Naive thymus-derived CD4-positive, alpha-beta T cell (primary cell): ENCODE measurements at regions of chr19 and their contacts with region 1.

Region 1: GRCh38 chr19:7535035-7535992 is at the start of gene PNPLA6:
- DNase-seq: peak; percentile 85 to 95 (median 91)
- ATAC-seq: peak; percentile 91
- H3K4me3 ChIP-seq: peak within 1 kb of the TSS; percentile 99
- H3K4me3 Mint-ChIP-seq: peak within 1 kb of the TSS; percentile 93 to 97 (median 94)
- H3K27ac ChIP-seq: peak within 1 kb of the TSS; percentile 81
- H3K27ac Mint-ChIP-seq: peak within 1 kb of the TSS; percentile 81 to 96 (median 92)
- H3K4me1 ChIP-seq: peaks cover 10 to 17% of the 10 kb centered on the region in 2 donors
- H3K4me1 Mint-ChIP-seq: peaks cover 6 to 26% (median 22%) of the 10 kb centered on the region in 7 donors
- H3K27me3 ChIP-seq: no peaks in the 10 kb centered on the region
- H3K27me3 Mint-ChIP-seq: no peaks in the 10 kb centered on the region
- total RNA-seq, gene PNPLA6: 82.0 to 157 (median 133) TPM

Region 2: DNA sequence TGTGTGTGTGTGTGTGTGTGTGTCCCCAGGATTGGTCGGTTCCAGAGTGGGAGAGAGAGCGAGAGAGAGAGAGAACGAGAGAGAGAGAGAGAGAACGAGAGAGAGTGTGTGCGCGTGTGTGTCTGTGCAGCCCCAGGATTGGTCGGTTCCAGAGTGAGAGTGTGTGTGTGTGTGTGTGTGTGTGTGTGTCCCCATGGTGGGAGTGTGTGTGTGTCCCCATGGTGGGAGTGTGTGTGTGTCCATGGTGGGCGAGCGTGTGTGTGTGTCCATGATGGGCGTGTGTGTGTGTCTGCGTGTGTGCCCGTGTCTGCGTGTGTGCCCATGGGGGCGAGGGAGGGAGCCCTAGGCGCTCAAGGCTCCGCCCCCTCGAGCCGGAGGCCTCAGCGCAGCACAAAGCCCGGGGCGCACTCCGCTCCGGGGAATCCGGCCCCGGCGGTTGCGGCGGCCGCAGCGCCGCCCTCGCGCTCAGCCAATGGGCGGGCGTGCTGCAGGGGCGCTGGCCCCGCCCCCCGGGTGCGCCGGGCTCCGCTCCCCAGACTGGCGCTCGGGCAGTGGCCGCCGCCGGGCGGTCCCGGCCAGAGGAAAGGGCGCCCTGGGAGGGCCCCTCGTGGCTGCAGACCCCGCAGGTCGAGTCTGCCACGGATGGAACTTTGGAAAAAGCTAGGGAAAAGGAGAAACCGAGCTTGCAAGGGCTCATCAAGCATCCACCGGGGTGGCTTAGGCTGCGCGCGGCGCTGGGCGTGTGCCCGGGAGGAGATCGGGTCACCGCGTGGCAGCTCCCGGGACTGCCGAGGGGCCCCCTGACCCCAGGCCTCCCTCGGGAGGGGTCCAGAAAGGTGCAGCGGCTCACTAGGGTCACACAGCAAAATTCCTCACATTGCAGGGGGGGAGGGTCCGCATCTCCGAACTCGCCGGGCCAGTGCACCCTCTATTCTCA is 337.3 kb before region 1 on chr19:
- CTCF ChIA-PET with region 1: no interaction called
- POLR2A ChIA-PET with region 1: no interaction called
- intact Hi-C with region 1: loop called in 1 of 2 experiments (anchors 1 kb)
- DNase-seq: peak; percentile 91 to 95 (median 94)
- ATAC-seq: peak; percentile 92
- H3K4me3 ChIP-seq: peak overlapping the region; percentile 75
- H3K4me3 Mint-ChIP-seq: peak overlapping the region; percentile 88 to 99 (median 94)
- H3K27ac ChIP-seq: peak overlapping the region; percentile 71
- H3K27ac Mint-ChIP-seq: peak overlapping the region; percentile 95 to 100 (median 97)
- H3K4me1 ChIP-seq: peaks cover 12 to 15% of the 10 kb centered on the region in 2 donors
- H3K4me1 Mint-ChIP-seq: peaks cover 0 to 20% (median 14%) of the 10 kb centered on the region in 7 donors
- H3K27me3 ChIP-seq: no peaks in the 10 kb centered on the region
- H3K27me3 Mint-ChIP-seq: peaks cover 0 to 47% (median 0%) of the 10 kb centered on the region in 5 donors

Region 3: DNA sequence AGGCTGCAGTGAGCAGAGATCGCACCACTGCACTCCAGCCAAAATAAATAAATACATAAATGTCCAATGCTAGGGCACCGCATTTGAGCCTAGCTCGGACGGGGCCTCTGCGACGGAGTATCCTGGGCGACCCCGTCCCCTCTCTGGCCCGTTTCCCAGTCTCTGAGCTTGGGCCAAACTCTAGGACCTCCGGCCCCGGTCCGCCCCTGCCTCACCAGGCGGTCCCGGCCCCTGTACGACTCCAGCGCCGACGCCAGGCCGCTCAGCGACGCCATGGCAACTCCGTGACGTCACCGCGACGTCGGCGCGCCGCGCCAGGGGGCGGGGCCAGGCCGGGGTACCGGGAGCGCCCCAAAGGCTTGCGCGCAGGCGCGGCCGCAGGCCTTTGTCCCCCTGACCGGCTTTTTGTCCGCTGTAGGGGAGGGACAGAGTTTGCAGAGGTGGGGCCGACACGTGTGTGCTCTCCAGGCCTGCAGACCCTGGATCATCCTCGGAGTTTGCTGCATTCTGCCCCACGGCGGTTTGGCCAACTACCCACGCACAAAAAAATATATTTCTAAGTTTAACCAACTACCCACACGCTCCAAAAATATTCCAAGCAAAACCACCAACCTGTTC is 46.5 kb before region 1 on chr19 and contains the start of gene PEX11G:
- CTCF ChIA-PET with region 1: no interaction called
- POLR2A ChIA-PET with region 1: interaction called, 10 read pairs
- intact Hi-C with region 1: loop called (anchors 1 to 2 kb)
- DNase-seq: peak; percentile 79 to 95 (median 90)
- ATAC-seq: peak; percentile 92
- H3K4me3 ChIP-seq: peak within 1 kb of the TSS; percentile 75
- H3K4me3 Mint-ChIP-seq: peak within 1 kb of the TSS; percentile 84 to 96 (median 90)
- H3K27ac ChIP-seq: peak within 1 kb of the TSS; percentile 84
- H3K27ac Mint-ChIP-seq: peak within 1 kb of the TSS; percentile 74 to 98 (median 94)
- H3K4me1 ChIP-seq: peaks cover 6 to 9% of the 10 kb centered on the region in 2 donors
- H3K4me1 Mint-ChIP-seq: peaks cover 3 to 28% (median 13%) of the 10 kb centered on the region in 7 donors
- H3K27me3 ChIP-seq: no peaks in the 10 kb centered on the region
- H3K27me3 Mint-ChIP-seq: no peaks in the 10 kb centered on the region
- total RNA-seq, gene PEX11G: 0.59 to 1.2 (median 0.76) TPM

Region 4: DNA sequence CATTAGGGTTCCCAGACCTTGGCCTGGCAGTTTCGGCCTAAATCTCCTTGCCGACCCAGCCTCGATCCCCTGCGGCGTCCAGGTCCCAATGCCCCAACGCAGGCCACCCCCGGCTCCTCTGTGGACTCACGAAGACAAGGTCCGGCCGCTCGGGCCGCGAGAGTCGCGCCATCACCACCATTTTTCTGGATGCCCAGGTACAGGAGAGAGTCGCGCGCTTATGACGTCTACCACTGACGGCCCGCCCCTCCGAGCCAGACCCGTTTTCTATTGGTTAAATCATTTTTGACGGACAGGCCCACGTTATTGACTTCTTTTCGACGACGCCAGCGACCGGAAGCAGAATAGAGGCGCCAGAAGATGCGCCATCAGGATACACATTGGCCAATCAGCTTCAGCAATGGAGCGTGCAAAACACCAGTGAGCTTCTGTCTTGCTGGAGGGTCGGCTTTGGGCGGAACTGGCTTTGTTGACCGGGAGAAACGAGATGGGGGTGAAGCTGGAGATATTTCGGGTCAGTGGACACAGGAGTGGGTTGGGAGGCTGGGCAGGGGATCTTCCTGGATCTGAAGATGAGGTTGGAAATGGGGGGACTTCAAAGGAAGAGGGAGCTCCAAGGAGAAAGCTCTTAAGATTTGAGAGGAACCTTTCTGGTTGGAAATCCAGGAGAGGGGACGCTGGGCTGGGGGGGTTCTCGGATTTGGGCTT is 94.2 kb after region 1 on chr19 and contains the starts of genes PET100 and XAB2:
- CTCF ChIA-PET with region 1: no interaction called
- POLR2A ChIA-PET with region 1: interaction called, 6 read pairs
- intact Hi-C with region 1: loop called (anchors 1 kb)
- DNase-seq: peak; percentile 81 to 97 (median 95)
- ATAC-seq: peak; percentile 97
- H3K4me3 ChIP-seq: peak within 1 kb of the TSS; percentile 89
- H3K4me3 Mint-ChIP-seq: peak within 1 kb of the TSS; percentile 87 to 100 (median 98)
- H3K27ac ChIP-seq: peak within 1 kb of the TSS; percentile 92
- H3K27ac Mint-ChIP-seq: peak within 1 kb of the TSS; percentile 96 to 100 (median 99)
- H3K4me1 ChIP-seq: peaks cover 19 to 21% of the 10 kb centered on the region in 2 donors
- H3K4me1 Mint-ChIP-seq: peaks cover 25 to 57% (median 38%) of the 10 kb centered on the region in 7 donors
- H3K27me3 ChIP-seq: no peaks in the 10 kb centered on the region
- H3K27me3 Mint-ChIP-seq: no peaks in the 10 kb centered on the region
- total RNA-seq, gene PET100: 112 to 134 (median 117) TPM
- total RNA-seq, gene XAB2: 49.3 to 79.8 (median 76.4) TPM

Region 5: GRCh38 chr19:7883796-7884570 is 348.7 kb after region 1 on chr19:
- CTCF ChIA-PET with region 1: no interaction called
- POLR2A ChIA-PET with region 1: no interaction called
- intact Hi-C with region 1: no loop called
- DNase-seq: no peak
- ATAC-seq: no peak
- H3K4me3 ChIP-seq: no peak overlapping the region
- H3K4me3 Mint-ChIP-seq: no peak overlapping the region
- H3K27ac ChIP-seq: no peak overlapping the region
- H3K27ac Mint-ChIP-seq: no peak overlapping the region
- H3K4me1 ChIP-seq: no peaks in the 10 kb centered on the region
- H3K4me1 Mint-ChIP-seq: peaks cover 0 to 5% (median 0%) of the 10 kb centered on the region in 7 donors
- H3K27me3 ChIP-seq: peaks cover 0 to 3% of the 10 kb centered on the region in 2 donors
- H3K27me3 Mint-ChIP-seq: peaks cover 5 to 12% (median 10%) of the 10 kb centered on the region in 5 donors

Region 6: GRCh38 chr19:7903244-7904073 is 368.1 kb after region 1 on chr19 and contains the start of gene MAP2K7:
- CTCF ChIA-PET with region 1: no interaction called
- POLR2A ChIA-PET with region 1: no interaction called
- intact Hi-C with region 1: loop called in 1 of 2 experiments (anchors 1 kb)
- DNase-seq: peak; percentile 99 to 100 (median 100)
- ATAC-seq: peak; percentile 91
- H3K4me3 ChIP-seq: peak within 1 kb of the TSS; percentile 91
- H3K4me3 Mint-ChIP-seq: peak within 1 kb of the TSS; percentile 87 to 95 (median 92)
- H3K27ac ChIP-seq: peak within 1 kb of the TSS; percentile 77
- H3K27ac Mint-ChIP-seq: peak within 1 kb of the TSS; percentile 91 to 98 (median 96)
- H3K4me1 ChIP-seq: peaks cover 20 to 24% of the 10 kb centered on the region in 2 donors
- H3K4me1 Mint-ChIP-seq: peaks cover 12 to 37% (median 30%) of the 10 kb centered on the region in 7 donors
- H3K27me3 ChIP-seq: no peaks in the 10 kb centered on the region
- H3K27me3 Mint-ChIP-seq: peaks cover 0 to 3% (median 0%) of the 10 kb centered on the region in 5 donors
- total RNA-seq, gene MAP2K7: 48.7 to 109 (median 66.5) TPM